ENCODE measurements at regions of chr22 and their contacts with region 1.

Region 1: GRCh38 chr22:36977947-36978660 is 41.1 kb downstream of the TST start:
- DNase-seq: peak; percentile 84 to 94 (median 88)
- ATAC-seq: peak; percentile 75 to 76
- H3K4me3 Mint-ChIP-seq: peak overlapping the region; percentile 88 to 99 (median 94)
- H3K27ac Mint-ChIP-seq: peak overlapping the region; percentile 91 to 99 (median 96)
- H3K4me1 Mint-ChIP-seq: peaks cover 7 to 16% (median 10%) of the 10 kb centered on the region in 4 donors
- H3K27me3 Mint-ChIP-seq: peaks cover 0 to 12% (median 3%) of the 10 kb centered on the region in 5 donors

Region 2: GRCh38 chr22:36775964-36776669 is 202.0 kb before region 1 on chr22 and contains the start of gene IFT27:
- POLR2A ChIA-PET with region 1: interaction called, 14 read pairs
- DNase-seq: peak; percentile 86 to 100 (median 98)
- ATAC-seq: peak; percentile 86 to 88
- H3K4me3 Mint-ChIP-seq: peak within 1 kb of the TSS; percentile 82 to 96 (median 92)
- H3K27ac Mint-ChIP-seq: peak within 1 kb of the TSS; percentile 94 to 99 (median 96)
- H3K4me1 Mint-ChIP-seq: peaks cover 22 to 38% (median 27%) of the 10 kb centered on the region in 4 donors
- H3K27me3 Mint-ChIP-seq: no peaks in the 10 kb centered on the region
- polyA plus RNA-seq, gene IFT27: 8.1 to 10.0 (median 9.1) TPM

Region 3: DNA sequence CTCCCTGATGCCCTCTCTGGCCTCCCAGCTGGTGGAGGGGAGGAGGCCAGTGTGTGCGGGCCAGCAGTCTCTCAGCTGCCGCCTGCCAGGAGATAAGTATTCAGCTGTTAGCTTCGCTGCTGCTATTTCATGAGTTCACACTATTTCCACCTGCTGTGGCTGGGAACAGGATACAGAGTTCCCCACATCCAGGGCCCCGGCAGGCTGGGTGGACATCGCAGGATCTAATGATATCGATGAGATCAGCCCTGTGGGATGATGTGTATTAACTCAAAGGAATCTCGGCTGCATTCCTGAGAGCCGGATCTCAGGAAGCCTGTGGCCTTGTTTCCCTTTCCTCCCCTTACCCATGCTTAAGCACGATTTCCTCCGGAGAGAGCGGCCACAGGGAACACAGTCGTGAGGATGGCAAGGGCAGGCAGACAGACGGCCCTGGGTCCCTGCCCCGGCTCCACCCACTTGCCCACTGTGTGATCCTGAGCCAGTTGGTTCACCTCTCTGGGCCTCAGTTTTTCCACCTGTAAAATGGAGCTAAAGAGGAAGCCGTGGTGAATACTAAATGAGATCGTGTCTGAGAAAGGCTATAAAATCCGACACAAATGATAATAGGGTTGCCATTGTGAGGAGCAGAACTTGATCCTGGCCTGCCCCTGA is 154.8 kb before region 1 on chr22:
- POLR2A ChIA-PET with region 1: no interaction called
- DNase-seq: no peak
- ATAC-seq: no peak
- H3K4me3 Mint-ChIP-seq: no peak overlapping the region
- H3K27ac Mint-ChIP-seq: no peak overlapping the region
- H3K4me1 Mint-ChIP-seq: peaks cover 0 to 8% (median 0%) of the 10 kb centered on the region in 4 donors
- H3K27me3 Mint-ChIP-seq: peaks cover 25 to 72% (median 47%) of the 10 kb centered on the region in 5 donors

Region 4: GRCh38 chr22:37030560-37031281 is 52.6 kb after region 1 on chr22:
- POLR2A ChIA-PET with region 1: no interaction called
- DNase-seq: no peak
- ATAC-seq: no peak
- H3K4me3 Mint-ChIP-seq: no peak overlapping the region
- H3K27ac Mint-ChIP-seq: no peak overlapping the region
- H3K4me1 Mint-ChIP-seq: no peaks in the 10 kb centered on the region
- H3K27me3 Mint-ChIP-seq: peaks cover 0 to 11% (median 4%) of the 10 kb centered on the region in 5 donors

Measured in naive thymus-derived CD8-positive, alpha-beta T cell (primary cell).